Aorta (tissue), 5 donors: ENCODE measurements at regions of chr3 and their contacts with region 1.

Region 1: DNA sequence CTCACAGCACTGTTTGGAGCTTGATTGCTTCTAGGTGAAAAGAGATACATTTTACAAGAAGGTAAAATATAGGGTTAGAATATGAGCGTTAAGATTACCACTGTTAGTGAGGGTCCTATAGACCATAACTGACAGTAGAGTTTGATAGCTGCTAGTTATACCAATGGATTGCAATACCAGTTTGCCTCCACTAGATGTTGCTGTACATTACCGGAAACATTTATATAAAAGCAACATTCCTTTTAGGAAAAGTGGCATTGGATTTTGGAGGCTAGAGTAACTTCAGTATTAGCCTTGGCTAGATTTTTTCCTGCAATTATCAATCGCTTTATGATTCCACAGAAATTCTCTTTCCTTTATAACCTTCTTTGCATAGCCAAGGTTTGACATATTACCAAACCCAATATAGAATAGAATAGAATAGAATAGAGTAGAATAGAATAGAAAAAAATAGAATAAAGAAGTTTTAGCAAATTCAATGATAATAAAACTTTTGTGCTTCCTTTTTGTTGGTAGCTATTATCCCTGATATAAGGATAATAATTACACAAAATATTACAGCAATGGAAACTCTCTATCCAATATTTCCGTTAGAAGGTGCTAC is 1093.6 kb upstream of the ALCAM start:
- DNase-seq: no peak
- ATAC-seq: no peak
- H3K4me3 ChIP-seq: no peak overlapping the region
- H3K27ac ChIP-seq: no peak overlapping the region
- H3K4me1 ChIP-seq: no peaks in the 10 kb centered on the region
- H3K27me3 ChIP-seq: no peaks in the 10 kb centered on the region

Region 2: GRCh38 chr3:104460477-104461406 is 187.6 kb after region 1 on chr3:
- intact Hi-C with region 1: loop called in 1 of 2 experiments (anchors 5 kb)
- DNase-seq: no peak
- ATAC-seq: no peak
- H3K4me3 ChIP-seq: no peak overlapping the region
- H3K27ac ChIP-seq: peak overlapping the region; percentile 6 to 90
- H3K4me1 ChIP-seq: no peaks in the 10 kb centered on the region
- H3K27me3 ChIP-seq: no peaks in the 10 kb centered on the region

Region 3: DNA sequence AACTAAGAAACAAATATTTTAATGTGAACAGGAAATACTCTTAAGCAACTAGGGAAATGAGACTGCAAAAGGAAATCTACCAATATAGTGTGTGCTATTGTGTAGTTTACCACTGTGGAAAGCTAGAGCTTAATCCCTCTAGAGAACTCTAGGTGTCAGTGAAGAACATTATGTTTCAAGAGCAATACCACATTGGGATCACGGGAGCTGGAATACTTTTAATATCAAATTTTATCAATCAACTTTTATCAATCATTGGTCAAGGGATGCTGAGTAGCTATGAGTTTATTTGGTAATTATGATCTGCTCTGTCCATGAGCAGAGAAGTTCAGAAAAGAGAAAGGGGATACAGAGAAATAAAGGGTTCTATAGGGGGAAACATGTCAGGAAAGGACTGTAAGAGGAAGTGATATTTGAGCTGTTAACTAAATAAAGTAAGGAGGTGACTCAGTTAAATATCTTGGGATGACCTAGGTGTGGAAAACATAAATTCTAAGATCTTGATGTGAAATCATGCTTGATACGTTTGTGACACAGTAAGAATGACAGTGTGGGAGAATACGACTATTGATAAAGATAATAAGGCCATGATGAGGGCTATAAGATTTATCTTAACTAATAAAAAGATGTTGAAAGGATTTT is 331.3 kb after region 1 on chr3:
- intact Hi-C with region 1: loop called in 1 of 2 experiments (anchors 10 kb)
- DNase-seq: no peak
- ATAC-seq: no peak
- H3K4me3 ChIP-seq: no peak overlapping the region
- H3K27ac ChIP-seq: no peak overlapping the region
- H3K4me1 ChIP-seq: no peaks in the 10 kb centered on the region
- H3K27me3 ChIP-seq: no peaks in the 10 kb centered on the region

Region 4: GRCh38 chr3:105518806-105519418 is 1245.8 kb after region 1 on chr3:
- intact Hi-C with region 1: loop called in 1 of 2 experiments (anchors 5 kb)
- DNase-seq: no peak
- ATAC-seq: no peak
- H3K4me3 ChIP-seq: no peak overlapping the region
- H3K27ac ChIP-seq: no peak overlapping the region
- H3K4me1 ChIP-seq: no peaks in the 10 kb centered on the region
- H3K27me3 ChIP-seq: no peaks in the 10 kb centered on the region